ENCODE measurements at regions of chr10 and their contacts with region 1.

Region 1: DNA sequence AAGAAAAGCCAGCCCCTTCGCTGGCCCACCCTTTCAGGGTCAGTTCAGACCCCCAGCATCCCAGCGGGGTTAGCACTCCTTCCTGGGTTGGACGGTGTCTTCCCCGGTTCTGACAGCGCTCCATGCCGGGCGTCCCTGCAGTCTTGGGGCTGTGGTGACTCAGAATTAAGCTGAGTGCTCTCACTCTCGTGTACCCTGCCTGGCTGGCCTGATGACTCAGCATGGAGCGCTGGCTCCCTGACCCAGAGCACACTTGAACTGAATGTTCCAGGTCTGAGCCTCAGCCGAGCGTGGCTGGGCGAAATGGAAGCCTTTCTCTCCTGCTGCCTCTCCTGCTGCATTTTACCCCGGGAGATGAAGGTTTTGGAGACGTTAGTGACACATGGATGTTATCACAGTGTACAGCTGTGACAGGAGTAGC is 7.1 kb downstream of the BAG3 start:
- DNase-seq: no peak
- H3K4me3 Mint-ChIP-seq: no peak overlapping the region
- H3K27ac Mint-ChIP-seq: no peak overlapping the region
- H3K4me1 Mint-ChIP-seq: peaks cover 61% of the 10 kb centered on the region
- H3K27me3 Mint-ChIP-seq: no peaks in the 10 kb centered on the region

Region 2: GRCh38 chr10:119496273-119496672 is 162.0 kb before region 1 on chr10:
- intact Hi-C with region 1: loop called (anchors 2 kb)
- DNase-seq: peak; percentile 22
- H3K4me3 Mint-ChIP-seq: no peak overlapping the region
- H3K27ac Mint-ChIP-seq: peak overlapping the region; percentile 60
- H3K4me1 Mint-ChIP-seq: peaks cover 68% of the 10 kb centered on the region
- H3K27me3 Mint-ChIP-seq: no peaks in the 10 kb centered on the region

Region 3: DNA sequence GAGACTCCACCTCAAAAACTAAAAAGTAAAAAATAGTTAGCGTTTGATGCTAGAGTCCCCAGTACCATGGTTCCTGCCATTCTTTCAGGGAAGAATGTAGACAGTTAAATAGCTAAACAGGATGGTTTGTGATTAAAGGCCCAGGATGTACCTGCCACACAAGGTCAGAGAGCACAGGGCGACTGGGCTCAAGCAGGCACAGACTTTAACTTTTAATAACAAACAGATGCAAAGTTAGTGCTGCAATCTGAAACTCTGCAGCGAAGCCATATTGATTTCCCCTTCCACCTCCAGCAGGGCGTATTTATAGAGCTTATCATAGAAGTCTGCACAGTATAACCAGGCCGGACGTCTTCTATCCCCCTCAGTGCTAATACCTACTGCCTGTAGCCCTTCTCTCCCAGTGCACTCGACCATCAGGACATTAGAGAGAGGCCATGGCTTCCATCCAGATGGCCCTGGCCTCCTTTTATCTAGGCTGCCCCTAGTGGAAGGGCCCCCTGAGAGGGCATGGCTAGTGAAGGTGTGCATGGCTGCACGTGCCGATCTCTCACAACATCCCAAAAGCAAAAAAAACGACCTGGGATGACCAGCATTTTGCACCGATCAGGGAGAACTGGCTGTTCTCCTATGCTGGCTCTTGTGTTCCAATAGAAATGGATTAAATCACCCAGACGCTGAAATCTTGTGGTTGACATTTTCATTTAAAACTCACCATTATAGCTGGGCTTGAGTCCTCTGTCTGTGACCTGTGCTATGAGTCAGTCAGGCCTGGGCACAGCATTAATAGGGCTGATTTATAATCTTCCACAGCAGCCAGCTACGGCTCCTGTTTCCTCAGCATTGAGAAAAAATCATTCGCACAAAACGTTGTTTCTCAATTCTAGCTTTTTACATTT is 14.7 kb before region 1 on chr10:
- intact Hi-C with region 1: loop called (anchors 1 kb)
- DNase-seq: no peak
- H3K4me3 Mint-ChIP-seq: no peak overlapping the region
- H3K27ac Mint-ChIP-seq: no peak overlapping the region
- H3K4me1 Mint-ChIP-seq: peaks cover 20% of the 10 kb centered on the region
- H3K27me3 Mint-ChIP-seq: peaks cover 54% of the 10 kb centered on the region

Region 4: DNA sequence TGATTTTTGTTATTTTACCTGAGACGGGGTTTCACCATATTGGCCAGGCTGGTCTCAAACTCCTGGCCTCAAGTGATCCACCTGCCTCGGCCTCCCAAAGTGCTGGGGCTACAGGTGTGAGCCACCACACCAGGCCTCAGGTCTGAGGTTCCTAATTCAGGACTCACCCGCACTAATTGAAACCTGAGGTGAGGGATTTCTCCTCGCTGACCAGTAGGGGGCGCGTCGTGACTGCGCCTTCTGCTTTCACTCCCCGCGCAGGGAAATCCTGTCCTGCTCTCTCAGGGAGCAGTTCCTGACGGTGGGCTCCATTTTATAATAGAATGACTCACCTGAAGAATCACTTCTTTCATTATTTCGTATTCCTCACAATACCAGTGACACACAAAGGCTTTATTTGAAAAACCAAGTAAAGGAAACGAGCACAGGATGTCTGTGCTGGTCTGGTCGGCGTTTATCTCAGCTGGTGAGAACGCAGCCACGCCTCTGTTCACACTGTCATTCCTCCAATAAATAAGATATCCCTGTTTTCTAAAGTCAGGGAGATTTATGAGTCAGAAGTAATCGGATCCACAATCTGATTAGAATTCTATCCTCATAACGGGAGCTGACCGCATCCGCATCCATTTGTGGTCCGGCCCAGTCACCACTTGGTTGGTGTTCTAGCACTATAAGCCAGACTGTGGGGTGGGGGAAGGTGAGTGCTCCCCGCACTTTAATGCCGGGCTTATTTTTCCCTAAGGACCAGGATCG is 28.4 kb after region 1 on chr10:
- intact Hi-C with region 1: loop called (anchors 2 kb)
- DNase-seq: peak; percentile 60
- H3K4me3 Mint-ChIP-seq: no peak overlapping the region
- H3K27ac Mint-ChIP-seq: no peak overlapping the region
- H3K4me1 Mint-ChIP-seq: peaks cover 24% of the 10 kb centered on the region
- H3K27me3 Mint-ChIP-seq: peaks cover 3% of the 10 kb centered on the region

Region 5: GRCh38 chr10:119705434-119705831 is 47.2 kb after region 1 on chr10:
- intact Hi-C with region 1: loop called (anchors 1 kb)
- DNase-seq: no peak
- H3K4me3 Mint-ChIP-seq: peak overlapping the region; percentile 33
- H3K27ac Mint-ChIP-seq: peak overlapping the region; percentile 96
- H3K4me1 Mint-ChIP-seq: peaks cover 58% of the 10 kb centered on the region
- H3K27me3 Mint-ChIP-seq: no peaks in the 10 kb centered on the region

Region 6: GRCh38 chr10:119725828-119726675 is 67.8 kb after region 1 on chr10 and contains the start of gene INPP5F:
- intact Hi-C with region 1: loop called (anchors 2 kb)
- DNase-seq: peak; percentile 98
- H3K4me3 Mint-ChIP-seq: peak within 1 kb of the TSS; percentile 83
- H3K27ac Mint-ChIP-seq: peak within 1 kb of the TSS; percentile 80
- H3K4me1 Mint-ChIP-seq: peaks cover 33% of the 10 kb centered on the region
- H3K27me3 Mint-ChIP-seq: peaks cover 4% of the 10 kb centered on the region
- total RNA-seq, gene INPP5F: 10.2 and 11.9 TPM in 2 replicates

Region 7: DNA sequence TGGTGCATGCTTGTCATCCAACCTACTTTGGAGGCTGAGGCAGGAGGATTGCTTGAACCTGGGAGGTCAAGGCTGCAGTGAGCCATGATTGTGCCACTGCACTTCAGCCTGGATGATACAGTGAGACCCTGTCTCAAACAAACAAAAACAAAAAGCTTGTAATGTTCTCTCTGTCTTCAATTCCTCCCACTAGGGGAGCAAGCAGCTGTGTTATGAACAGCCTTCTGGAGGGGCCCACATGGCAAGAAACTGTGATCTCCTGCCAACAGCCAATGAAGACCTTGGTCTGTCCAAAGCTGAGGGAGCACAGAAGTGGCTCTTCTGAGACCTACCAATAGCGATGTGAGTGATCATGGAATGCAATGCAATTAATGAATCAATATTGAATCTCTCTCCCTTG is 463.5 kb after region 1 on chr10:
- intact Hi-C with region 1: no loop called
- DNase-seq: no peak
- H3K4me3 Mint-ChIP-seq: no peak overlapping the region
- H3K27ac Mint-ChIP-seq: no peak overlapping the region
- H3K4me1 Mint-ChIP-seq: no peaks in the 10 kb centered on the region
- H3K27me3 Mint-ChIP-seq: peaks cover 3% of the 10 kb centered on the region

Measured in activated T-helper 2 cell treated with anti-CD3 and anti-CD28 coated beads, Interferon-gamma antibody, Interleukin-2, Interleukin-4, amounts not matched to agents 10 μg/mL and 5 μg/mL and 100 μg/mL, durations not matched to agents 14 hours and 24 hours and 36 hours (primary cell).